ENCODE measurements at regions of chr6 and their contacts with region 1.

Region 1: DNA sequence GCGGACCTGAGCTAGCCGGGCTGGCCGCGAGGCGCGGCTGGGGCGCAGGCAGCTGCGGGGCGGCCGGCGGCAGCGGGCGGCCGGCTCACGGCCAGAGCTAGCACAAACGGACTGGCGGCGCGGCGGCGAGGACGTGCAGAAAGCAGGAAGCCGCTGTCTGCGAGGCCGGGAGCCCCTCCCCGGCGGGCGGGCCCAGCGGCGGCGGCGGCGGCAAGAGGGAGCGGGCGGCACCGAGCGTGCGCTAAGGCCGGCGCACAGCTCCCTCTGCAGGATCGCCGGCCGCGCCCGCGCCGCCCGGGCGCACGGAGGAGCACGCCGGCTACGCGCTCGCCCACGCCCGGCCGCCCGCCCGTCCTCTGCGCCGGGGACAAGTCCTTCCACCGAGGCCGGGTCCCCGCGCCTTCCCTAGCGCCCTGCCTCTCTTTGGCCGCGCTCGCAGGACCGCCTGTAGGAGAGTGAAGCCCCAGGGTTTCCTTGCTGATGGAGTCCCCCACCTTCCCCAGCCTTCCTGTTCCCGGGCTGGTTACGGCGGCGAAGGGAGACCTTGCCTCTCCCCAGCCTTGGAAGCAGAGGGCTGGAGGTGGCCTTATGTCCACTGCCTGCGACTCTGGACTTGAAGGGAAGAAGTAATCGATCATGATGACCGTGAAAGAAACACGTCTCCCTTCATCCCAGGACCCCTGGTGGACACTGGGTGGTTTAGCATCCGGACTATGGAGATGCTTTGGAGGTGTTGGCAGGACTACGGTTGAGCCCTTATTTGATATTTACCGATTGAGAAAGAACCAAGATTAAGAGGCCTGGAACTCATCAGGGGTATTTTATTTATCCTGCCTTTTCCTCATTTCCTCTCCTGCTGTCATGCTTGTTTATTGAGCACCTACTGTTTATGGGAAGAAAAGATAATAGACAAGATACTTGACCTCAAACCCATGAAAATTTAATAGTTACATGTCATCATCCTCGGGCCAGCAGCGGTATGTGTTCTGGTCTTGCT is at the start of gene PREP:
- DNase-seq: peak; percentile 85
- H3K4me3 Mint-ChIP-seq: peak within 1 kb of the TSS; percentile 82
- H3K27ac Mint-ChIP-seq: peak within 1 kb of the TSS; percentile 65
- H3K4me1 Mint-ChIP-seq: peaks cover 28% of the 10 kb centered on the region
- H3K27me3 Mint-ChIP-seq: no peaks in the 10 kb centered on the region
- CTCF ChIP-seq: peak; percentile 60
- total RNA-seq, gene PREP: 57.8 and 67.6 TPM in 2 replicates

Region 2: GRCh38 chr6:104789770-104790190 is 613.5 kb before region 1 on chr6:
- CTCF ChIA-PET with region 1: interaction called, 4 read pairs
- POLR2A ChIA-PET with region 1: no interaction called
- intact Hi-C with region 1: loop called (anchors 10 kb)
- DNase-seq: peak; percentile 53
- H3K4me3 Mint-ChIP-seq: peak overlapping the region; percentile 59
- H3K27ac Mint-ChIP-seq: peak overlapping the region; percentile 95
- H3K4me1 Mint-ChIP-seq: peaks cover 21% of the 10 kb centered on the region
- H3K27me3 Mint-ChIP-seq: no peaks in the 10 kb centered on the region
- CTCF ChIP-seq: peak; percentile 45

Region 3: GRCh38 chr6:105136431-105137350 is 266.5 kb before region 1 on chr6:
- CTCF ChIA-PET with region 1: no interaction called
- POLR2A ChIA-PET with region 1: no interaction called
- intact Hi-C with region 1: loop called (anchors 1 kb)
- DNase-seq: peak; percentile 32
- H3K4me3 Mint-ChIP-seq: peak overlapping the region; percentile 68
- H3K27ac Mint-ChIP-seq: no peak overlapping the region
- H3K4me1 Mint-ChIP-seq: no peaks in the 10 kb centered on the region
- H3K27me3 Mint-ChIP-seq: peaks cover 6% of the 10 kb centered on the region
- CTCF ChIP-seq: peak; percentile 15

Region 4: GRCh38 chr6:105346052-105346451 is 57.2 kb before region 1 on chr6:
- CTCF ChIA-PET with region 1: interaction called, 8 read pairs
- POLR2A ChIA-PET with region 1: interaction called, 23 read pairs
- intact Hi-C with region 1: no loop called
- DNase-seq: peak; percentile 56
- H3K4me3 Mint-ChIP-seq: no peak overlapping the region
- H3K27ac Mint-ChIP-seq: peak overlapping the region; percentile 67
- H3K4me1 Mint-ChIP-seq: peaks cover 11% of the 10 kb centered on the region
- H3K27me3 Mint-ChIP-seq: no peaks in the 10 kb centered on the region
- CTCF ChIP-seq: no peak

Region 5: GRCh38 chr6:105391705-105392104 is 11.5 kb before region 1 on chr6:
- CTCF ChIA-PET with region 1: interaction called, 7 read pairs
- POLR2A ChIA-PET with region 1: interaction called, 13 read pairs
- intact Hi-C with region 1: no loop called
- DNase-seq: no peak
- H3K4me3 Mint-ChIP-seq: no peak overlapping the region
- H3K27ac Mint-ChIP-seq: no peak overlapping the region
- H3K4me1 Mint-ChIP-seq: peaks cover 8% of the 10 kb centered on the region
- H3K27me3 Mint-ChIP-seq: no peaks in the 10 kb centered on the region
- CTCF ChIP-seq: no peak

Measured in MCF 10A (cell line).